ENCODE measurements at regions of chr9 and their contacts with region 1.

Region 1: GRCh38 chr9:129626079-129626624 is at the start of gene NTMT1:
- DNase-seq: peak; percentile 89
- H3K4me3 Mint-ChIP-seq: peak within 1 kb of the TSS; percentile 81
- H3K27ac Mint-ChIP-seq: peak within 1 kb of the TSS; percentile 92
- H3K4me1 Mint-ChIP-seq: peaks cover 57% of the 10 kb centered on the region
- H3K27me3 Mint-ChIP-seq: peaks cover 28% of the 10 kb centered on the region

Region 2: GRCh38 chr9:129131300-129132145 is 494.6 kb before region 1 on chr9:
- CTCF ChIA-PET with region 1: interaction called, 44 read pairs
- DNase-seq: peak; percentile 90
- H3K4me3 Mint-ChIP-seq: no peak overlapping the region
- H3K27ac Mint-ChIP-seq: peak overlapping the region; percentile 79
- H3K4me1 Mint-ChIP-seq: peaks cover 6% of the 10 kb centered on the region
- H3K27me3 Mint-ChIP-seq: no peaks in the 10 kb centered on the region

Region 3: DNA sequence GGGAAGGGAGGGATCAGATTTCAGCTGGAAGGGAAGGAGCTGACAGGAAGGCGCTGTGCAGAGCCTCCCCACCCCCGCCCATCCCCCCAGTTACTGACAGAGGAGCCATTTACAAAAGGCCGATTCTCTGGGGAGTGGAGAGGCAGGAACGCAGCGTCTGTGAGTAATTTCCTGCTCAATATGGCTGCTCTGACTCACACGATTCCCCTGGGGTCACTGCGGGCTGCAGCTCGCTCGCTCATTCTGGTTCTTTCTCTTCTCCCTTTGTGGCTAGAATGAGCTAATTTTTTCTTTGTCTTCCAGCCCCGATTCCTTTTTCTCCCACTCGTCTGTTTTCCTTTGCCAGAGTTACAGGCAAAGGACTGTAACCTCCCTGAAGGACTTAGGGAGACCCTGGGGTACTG is 486.2 kb before region 1 on chr9:
- CTCF ChIA-PET with region 1: interaction called, 22 read pairs
- DNase-seq: peak; percentile 86
- H3K4me3 Mint-ChIP-seq: peak overlapping the region; percentile 74
- H3K27ac Mint-ChIP-seq: peak overlapping the region; percentile 96
- H3K4me1 Mint-ChIP-seq: peaks cover 39% of the 10 kb centered on the region
- H3K27me3 Mint-ChIP-seq: no peaks in the 10 kb centered on the region

Region 4: GRCh38 chr9:129174085-129174723 is 451.9 kb before region 1 on chr9:
- CTCF ChIA-PET with region 1: interaction called, 19 read pairs
- DNase-seq: peak; percentile 88
- H3K4me3 Mint-ChIP-seq: peak overlapping the region; percentile 71
- H3K27ac Mint-ChIP-seq: peak overlapping the region; percentile 42
- H3K4me1 Mint-ChIP-seq: peaks cover 32% of the 10 kb centered on the region
- H3K27me3 Mint-ChIP-seq: peaks cover 78% of the 10 kb centered on the region

Region 5: DNA sequence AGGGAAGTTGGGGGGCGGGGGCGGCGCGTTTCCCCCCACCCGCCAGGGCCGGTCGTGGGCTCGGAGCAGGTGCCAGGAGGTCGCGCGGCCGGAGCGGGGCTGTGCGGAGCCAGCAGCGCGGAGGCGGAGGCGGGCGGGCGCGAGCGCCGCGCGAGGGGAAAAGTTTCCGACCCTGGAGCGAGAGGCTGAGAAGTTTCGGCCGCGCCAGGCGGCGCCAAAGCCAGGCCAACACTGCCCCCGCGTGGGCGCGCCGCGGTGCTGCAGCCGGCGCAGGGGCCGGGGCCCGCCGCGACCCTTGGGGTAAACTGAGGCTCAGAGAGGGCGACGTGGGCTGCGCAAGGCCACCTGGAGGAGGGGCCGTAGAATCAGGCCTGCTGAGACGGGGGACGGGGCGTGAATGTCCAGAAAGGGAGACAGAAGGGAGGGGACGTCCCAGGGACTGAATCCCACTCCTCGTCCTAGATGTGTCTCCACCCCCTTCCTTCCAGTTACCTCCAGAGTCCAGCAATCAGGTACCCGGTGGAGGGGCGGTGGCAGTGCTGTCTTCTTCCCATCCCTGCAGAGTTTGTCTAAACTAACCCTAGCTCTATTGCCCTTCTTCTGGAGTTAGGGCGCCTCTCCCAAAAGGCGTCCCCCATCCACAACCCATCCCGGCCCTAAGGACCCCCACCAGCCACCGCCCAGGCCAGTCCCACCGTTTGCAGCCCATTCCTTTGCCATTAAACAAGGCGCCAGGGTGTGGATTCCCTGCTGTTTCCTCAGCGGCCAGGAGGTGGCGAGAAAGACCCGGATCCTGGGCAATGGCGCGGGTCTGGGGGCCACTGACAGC is 15.5 kb before region 1 on chr9:
- CTCF ChIA-PET with region 1: interaction called, 63 read pairs
- DNase-seq: peak; percentile 80
- H3K4me3 Mint-ChIP-seq: peak overlapping the region; percentile 64
- H3K27ac Mint-ChIP-seq: no peak overlapping the region
- H3K4me1 Mint-ChIP-seq: peaks cover 47% of the 10 kb centered on the region
- H3K27me3 Mint-ChIP-seq: peaks cover 53% of the 10 kb centered on the region

Region 6: DNA sequence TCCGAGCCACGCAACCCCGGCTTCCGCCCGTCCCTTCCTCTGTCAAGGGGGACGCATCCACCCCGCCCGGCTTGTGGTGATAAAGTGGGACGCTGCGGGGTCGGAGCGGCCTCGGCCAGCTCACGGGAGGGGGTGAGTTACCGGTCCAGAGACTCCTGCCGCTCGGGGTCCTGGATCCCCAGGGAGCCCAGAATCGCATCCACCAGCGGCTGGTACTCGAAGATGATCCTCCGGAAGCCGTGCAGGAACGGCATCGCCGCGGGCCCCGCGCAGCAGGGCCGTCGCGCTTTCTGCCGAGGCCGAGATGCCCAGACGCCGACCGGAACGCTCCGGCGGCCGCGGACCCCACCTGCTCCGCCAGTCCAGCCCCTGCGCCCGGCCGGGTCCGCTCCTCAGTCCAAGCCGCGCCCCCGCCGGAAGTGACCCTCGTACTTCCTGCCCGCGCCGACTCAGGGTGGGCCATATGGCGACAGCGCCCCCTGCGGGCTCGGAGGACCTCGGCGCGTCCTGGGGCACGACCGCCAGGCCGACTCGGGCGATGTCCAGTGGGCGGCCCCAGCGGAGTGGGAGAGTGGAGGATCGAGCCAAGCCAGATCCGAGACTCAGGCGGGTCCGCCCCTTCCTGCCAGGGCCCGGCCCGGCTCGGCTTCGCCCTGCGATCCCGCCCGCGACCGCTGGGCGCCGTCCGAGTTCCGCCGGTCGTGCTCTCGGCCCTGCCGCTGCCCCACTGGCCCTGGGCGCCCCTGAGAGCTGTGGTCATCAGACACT is 15.8 kb after region 1 on chr9 and contains the start of gene ASB6:
- CTCF ChIA-PET with region 1: interaction called, 15 read pairs
- DNase-seq: peak; percentile 94
- H3K4me3 Mint-ChIP-seq: peak within 1 kb of the TSS; percentile 72
- H3K27ac Mint-ChIP-seq: peak within 1 kb of the TSS; percentile 86
- H3K4me1 Mint-ChIP-seq: peaks cover 23% of the 10 kb centered on the region
- H3K27me3 Mint-ChIP-seq: no peaks in the 10 kb centered on the region

Region 7: DNA sequence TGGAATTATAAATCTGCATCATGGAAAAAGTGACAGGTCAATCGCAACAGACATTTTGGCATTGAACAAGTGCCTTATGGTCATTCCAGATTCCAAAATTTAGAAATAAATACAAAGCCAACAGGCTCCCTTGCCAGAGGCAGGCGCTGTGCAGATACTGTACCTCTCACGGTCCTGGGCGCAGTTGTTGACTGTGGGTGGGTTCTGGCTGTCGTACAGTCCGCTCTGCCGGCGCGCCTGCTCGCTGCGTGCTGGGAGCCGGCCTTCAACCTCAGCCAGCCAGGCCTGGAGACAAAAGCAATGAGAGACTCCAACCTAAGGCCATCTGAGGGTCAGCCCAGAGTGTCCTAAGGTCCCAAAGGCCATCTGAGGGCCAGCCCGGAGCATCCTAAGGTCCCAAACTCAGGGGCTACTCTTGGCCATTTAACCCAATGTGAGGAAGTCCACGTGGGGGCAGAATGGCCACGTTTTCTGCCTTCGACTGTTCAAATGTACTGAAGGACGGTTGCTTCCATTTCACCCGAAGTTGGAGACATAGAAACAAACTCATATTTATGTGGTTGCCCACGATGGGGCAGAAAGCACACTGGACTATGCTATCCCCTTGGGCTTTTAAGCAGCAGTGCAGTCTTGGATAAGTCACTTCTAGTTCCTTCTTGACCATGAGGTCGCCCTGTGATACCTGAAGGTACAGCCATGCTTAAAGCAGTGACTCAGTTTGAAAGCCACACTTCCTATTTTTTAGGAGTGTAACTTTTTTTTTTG is 274.3 kb after region 1 on chr9:
- CTCF ChIA-PET with region 1: no interaction called
- DNase-seq: no peak
- H3K4me3 Mint-ChIP-seq: no peak overlapping the region
- H3K27ac Mint-ChIP-seq: peak overlapping the region; percentile 19
- H3K4me1 Mint-ChIP-seq: peaks cover 61% of the 10 kb centered on the region
- H3K27me3 Mint-ChIP-seq: no peaks in the 10 kb centered on the region

Measured in activated naive CD4-positive, alpha-beta T cell treated with anti-CD3 and anti-CD28 coated beads, Interleukin-2, amount 10 ng/mL, durations not matched to agents 7 days and 5 days (primary cell).